ENCODE measurements at regions of chr6 and their contacts with region 1.

Region 1: DNA sequence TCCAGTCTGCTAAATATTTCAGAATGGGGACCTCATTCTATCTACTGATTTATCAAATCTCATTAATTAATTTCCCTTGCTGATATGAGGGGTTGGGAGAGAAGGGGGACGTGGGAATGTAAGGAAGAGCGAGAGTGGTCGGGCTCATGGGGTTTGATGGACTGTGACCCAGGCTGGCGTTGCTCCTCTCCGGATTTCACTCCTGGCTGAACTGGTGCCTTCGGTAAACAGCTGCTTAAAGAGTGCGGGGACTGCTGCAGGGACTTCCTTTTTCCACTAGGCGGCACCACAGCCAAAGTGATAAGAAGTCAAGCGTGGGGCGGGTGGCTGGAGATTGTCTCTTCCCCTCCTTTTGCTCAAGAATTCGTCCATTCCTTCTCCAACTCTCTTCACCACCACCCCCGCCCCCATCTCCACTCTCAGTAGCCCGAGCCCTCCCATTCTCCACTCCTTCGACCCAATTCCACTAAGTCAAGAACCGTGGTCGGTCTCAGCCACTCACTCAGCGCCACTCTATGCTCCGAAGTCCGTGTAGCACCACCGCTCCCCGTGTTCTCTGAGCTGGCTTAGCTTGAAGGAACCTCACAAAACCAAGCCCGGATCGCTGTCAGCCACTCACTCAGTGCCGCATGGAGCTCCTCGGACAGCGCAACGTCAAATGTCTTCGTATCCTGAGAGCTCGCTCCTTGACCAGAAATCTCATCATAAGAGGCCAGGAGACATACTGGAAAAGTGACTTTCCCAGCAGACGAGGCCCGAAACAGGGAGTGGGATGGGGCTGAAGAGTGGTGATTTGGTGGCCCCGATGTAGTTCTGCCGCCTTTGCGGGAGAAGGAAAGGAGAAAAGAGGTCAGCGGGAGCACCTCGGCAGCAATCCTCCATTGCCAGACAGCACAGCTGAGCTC is 9.7 kb downstream of the TRIM31 start:
- DNase-seq: peak; percentile 80 to 93 (median 91)
- ATAC-seq: peak; percentile 81 to 83
- H3K4me3 ChIP-seq: peak overlapping the region; percentile 49
- H3K27ac ChIP-seq: peak overlapping the region; percentile 47
- H3K4me1 ChIP-seq: peaks cover 2% of the 10 kb centered on the region
- H3K27me3 ChIP-seq: no peaks in the 10 kb centered on the region

Region 2: DNA sequence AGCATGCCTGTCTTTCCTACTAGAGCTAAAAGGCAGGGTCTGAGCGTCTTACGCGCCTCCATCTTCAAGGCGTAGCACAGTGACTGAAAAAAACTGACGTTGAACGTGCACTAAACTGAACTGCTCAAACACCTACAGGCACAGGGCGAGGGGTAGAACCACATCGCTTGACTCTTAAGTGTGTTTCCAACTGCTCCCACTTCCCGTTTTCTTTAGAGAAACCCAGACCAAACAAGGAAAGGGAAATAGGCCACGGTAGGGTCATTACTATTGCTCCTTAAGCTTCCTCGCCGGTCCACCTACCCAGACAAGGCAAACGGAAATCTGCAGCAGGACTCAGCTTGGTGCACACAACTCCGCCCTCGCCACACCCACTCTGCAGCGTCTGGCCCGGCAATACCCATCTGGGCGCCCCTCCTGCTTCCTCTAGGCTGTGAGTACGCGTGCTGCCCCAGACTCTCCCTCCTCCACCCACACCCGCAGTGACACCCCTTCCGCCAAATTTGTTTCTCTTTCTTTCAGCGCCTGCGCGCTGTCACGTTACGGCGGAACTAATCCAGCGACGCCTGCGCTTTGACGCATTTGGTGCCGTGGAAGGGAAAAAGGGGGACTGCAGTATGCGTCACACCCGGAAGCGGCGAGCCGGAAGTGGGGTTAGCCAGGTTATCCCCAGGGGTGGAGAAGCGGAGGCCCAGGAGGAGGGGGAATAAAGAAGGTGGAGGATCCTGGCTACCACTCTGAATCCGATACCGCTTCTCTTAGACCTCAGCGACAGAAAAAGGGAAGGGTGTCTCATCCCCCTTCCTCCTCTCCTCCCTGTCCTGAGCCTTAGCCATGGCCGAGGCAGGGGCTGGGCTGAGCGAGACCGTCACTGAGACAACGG is 36.4 kb before region 1 on chr6 and contains the start of gene PPP1R11:
- intact Hi-C with region 1: loop called in 1 of 4 experiments (anchors 5 kb)
- DNase-seq: peak; percentile 98 to 99 (median 99)
- ATAC-seq: peak; percentile 99
- H3K4me3 ChIP-seq: peak within 1 kb of the TSS; percentile 85
- H3K27ac ChIP-seq: peak within 1 kb of the TSS; percentile 79
- H3K4me1 ChIP-seq: peaks cover 7% of the 10 kb centered on the region
- H3K27me3 ChIP-seq: no peaks in the 10 kb centered on the region
- total RNA-seq, gene PPP1R11: 50.3 to 53.7 (median 50.8) TPM

Region 3: GRCh38 chr6:30130887-30131862 is 28.0 kb after region 1 on chr6:
- intact Hi-C with region 1: loop called in 1 of 4 experiments (anchors 2 kb)
- DNase-seq: peak; percentile 52 to 75 (median 62)
- ATAC-seq: peak; percentile 84 to 89
- H3K4me3 ChIP-seq: no peak overlapping the region
- H3K27ac ChIP-seq: no peak overlapping the region
- H3K4me1 ChIP-seq: no peaks in the 10 kb centered on the region
- H3K27me3 ChIP-seq: no peaks in the 10 kb centered on the region